Breast epithelium (tissue), 4 donors: ENCODE measurements at regions of chr7 and their contacts with region 1.

Region 1: GRCh38 chr7:68250143-68250542 is 1253.5 kb downstream of the TYW1 start:
- DNase-seq: no peak
- H3K4me3 ChIP-seq: no peak overlapping the region
- H3K27ac ChIP-seq: no peak overlapping the region
- H3K4me1 ChIP-seq: no peaks in the 10 kb centered on the region
- H3K27me3 ChIP-seq: no peaks in the 10 kb centered on the region
- CTCF ChIP-seq: no peak
- POLR2A ChIP-seq: no peak

Region 2: DNA sequence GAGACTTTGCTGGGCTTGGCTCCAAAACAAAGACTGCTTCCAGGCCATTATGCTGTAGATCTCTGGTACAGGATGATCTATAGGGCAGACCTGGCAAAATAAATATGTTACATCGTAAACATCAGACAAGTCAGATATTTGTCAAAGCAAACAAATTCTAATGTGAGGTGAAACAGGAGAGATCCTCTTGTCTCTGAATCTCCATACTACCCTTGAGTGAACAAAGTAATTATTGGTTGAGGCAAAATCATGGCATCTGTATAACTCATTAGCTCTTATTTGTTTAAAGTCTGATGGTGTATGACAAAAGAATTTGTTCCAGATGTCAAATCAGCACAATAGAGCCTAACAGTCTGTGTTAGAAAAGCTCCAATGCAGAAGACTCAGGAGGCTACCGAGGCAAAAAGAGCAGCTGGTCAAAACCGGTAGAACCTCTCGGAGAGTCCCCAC is 38.0 kb after region 1 on chr7:
- intact Hi-C with region 1: no loop called
- DNase-seq: no peak
- H3K4me3 ChIP-seq: no peak overlapping the region
- H3K27ac ChIP-seq: no peak overlapping the region
- H3K4me1 ChIP-seq: no peaks in the 10 kb centered on the region
- H3K27me3 ChIP-seq: no peaks in the 10 kb centered on the region
- CTCF ChIP-seq: no peak
- POLR2A ChIP-seq: no peak

Region 3: GRCh38 chr7:70040970-70041766 is 1791.0 kb after region 1 on chr7:
- intact Hi-C with region 1: loop called (anchors 5 kb)
- DNase-seq: no peak
- H3K4me3 ChIP-seq: no peak overlapping the region
- H3K27ac ChIP-seq: no peak overlapping the region
- H3K4me1 ChIP-seq: no peaks in the 10 kb centered on the region
- H3K27me3 ChIP-seq: no peaks in the 10 kb centered on the region
- CTCF ChIP-seq: peak in 2 of 3 donors; percentile 23 to 35
- POLR2A ChIP-seq: no peak